AG04450 (cell line): ENCODE measurements at regions of chr6 and their contacts with region 1.

Region 1: GRCh38 chr6:34610819-34611477 is 54.8 kb upstream of the SPDEF start:
- DNase-seq: peak; percentile 59
- H3K4me3 ChIP-seq: no peak overlapping the region
- H3K27ac ChIP-seq: peak overlapping the region; percentile 49
- H3K27me3 ChIP-seq: no peaks in the 10 kb centered on the region
- CTCF ChIP-seq: no peak

Region 2: DNA sequence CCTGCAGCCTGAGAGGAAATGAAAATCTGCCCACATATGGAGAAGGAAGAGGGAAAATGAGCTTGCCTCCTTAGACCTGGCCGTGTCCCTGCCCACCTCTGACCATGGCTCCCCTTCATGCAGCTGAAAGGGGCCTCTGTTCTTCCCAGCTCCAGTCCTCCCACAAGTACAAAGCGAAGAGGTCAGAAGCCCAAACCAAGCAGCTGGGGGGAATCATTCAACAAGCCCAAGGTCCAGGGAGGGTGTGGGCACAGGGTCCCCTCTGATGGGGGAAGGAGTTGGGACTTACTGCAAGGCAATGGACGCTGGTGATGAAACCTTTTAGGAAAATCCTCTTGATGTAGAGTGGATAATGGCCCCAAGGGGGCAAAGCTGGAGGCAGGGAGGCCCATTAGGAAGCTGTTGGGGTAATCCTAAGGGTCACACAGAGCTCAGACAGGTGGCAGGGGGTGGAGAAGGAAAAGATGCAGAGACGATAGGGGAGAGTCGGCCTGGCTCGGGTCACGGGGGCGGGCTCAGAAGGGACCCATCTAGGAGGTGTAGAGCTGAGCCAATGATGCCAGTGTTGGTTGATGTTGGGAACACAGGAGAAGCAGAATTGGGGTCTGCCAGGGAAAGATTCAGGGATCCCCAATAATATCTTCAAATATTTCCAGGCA is 449.0 kb before region 1 on chr6:
- CTCF ChIA-PET with region 1: interaction called, 64 read pairs
- POLR2A ChIA-PET with region 1: no interaction called
- DNase-seq: no peak
- H3K4me3 ChIP-seq: no peak overlapping the region
- H3K27ac ChIP-seq: no peak overlapping the region
- H3K27me3 ChIP-seq: peaks cover 14% of the 10 kb centered on the region
- CTCF ChIP-seq: no peak

Region 3: DNA sequence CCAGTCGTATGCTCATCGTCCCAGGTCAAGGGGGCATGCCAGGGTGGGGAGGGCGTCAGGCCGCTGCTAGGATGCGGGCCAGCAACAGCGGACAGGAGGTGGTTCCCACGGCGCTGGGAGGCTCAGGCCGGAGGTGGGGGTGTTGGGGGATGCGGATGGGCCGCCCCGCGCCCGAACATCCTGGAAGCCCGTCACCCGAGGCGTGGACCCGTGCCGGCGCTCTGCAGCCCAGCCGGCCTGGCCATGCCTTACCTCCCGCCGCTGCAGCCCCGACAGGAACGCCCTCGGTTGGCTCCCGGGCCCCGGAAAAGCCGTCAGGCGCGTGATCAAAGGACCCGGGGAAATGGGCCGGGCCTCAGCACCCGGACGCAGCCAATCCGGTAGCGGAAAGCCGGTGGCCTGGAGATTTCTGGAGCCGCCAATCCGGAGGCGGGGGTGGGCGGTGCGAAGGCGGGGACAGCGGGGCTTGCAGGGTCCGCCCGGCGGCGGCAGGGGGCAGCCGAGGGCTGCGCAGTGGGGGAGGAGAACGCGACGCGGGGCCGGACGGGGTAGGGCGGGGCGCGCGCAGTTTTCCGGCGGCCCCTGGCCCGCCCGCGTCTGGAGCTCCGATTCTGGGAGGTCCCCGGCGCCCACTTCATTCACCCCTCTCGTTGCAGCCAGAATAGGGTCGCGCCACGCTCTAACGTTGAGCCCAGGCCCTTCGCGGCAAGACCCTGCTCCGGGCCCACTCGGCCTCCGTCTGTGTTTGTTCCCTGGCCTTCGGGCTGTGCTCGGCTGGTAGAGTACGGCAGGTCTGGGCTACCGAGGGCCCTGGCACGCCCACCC is 362.0 kb before region 1 on chr6 and contains the start of gene SMIM29:
- CTCF ChIA-PET with region 1: interaction called, 39 read pairs
- POLR2A ChIA-PET with region 1: interaction called, 3 read pairs
- DNase-seq: peak; percentile 87
- H3K4me3 ChIP-seq: peak within 1 kb of the TSS; percentile 91
- H3K27ac ChIP-seq: peak within 1 kb of the TSS; percentile 47
- H3K27me3 ChIP-seq: no peaks in the 10 kb centered on the region
- CTCF ChIP-seq: peak; percentile 80
- polyA plus RNA-seq, gene SMIM29: 11.3 and 17.2 TPM in 2 replicates

Region 4: GRCh38 chr6:34459899-34460593 is 150.9 kb before region 1 on chr6:
- CTCF ChIA-PET with region 1: interaction called, 53 read pairs
- POLR2A ChIA-PET with region 1: no interaction called
- DNase-seq: no peak
- H3K4me3 ChIP-seq: no peak overlapping the region
- H3K27ac ChIP-seq: no peak overlapping the region
- H3K27me3 ChIP-seq: peaks cover 3% of the 10 kb centered on the region
- CTCF ChIP-seq: peak; percentile 66

Region 5: GRCh38 chr6:34595332-34596184 is 15.4 kb before region 1 on chr6:
- CTCF ChIA-PET with region 1: interaction called, 26 read pairs
- POLR2A ChIA-PET with region 1: no interaction called
- DNase-seq: no peak
- H3K4me3 ChIP-seq: no peak overlapping the region
- H3K27ac ChIP-seq: no peak overlapping the region
- H3K27me3 ChIP-seq: no peaks in the 10 kb centered on the region
- CTCF ChIP-seq: no peak

Region 6: GRCh38 chr6:34904990-34905613 is 294.2 kb after region 1 on chr6:
- CTCF ChIA-PET with region 1: no interaction called
- POLR2A ChIA-PET with region 1: no interaction called
- DNase-seq: no peak
- H3K4me3 ChIP-seq: no peak overlapping the region
- H3K27ac ChIP-seq: no peak overlapping the region
- H3K27me3 ChIP-seq: peaks cover 7% of the 10 kb centered on the region
- CTCF ChIP-seq: no peak

Region 7: DNA sequence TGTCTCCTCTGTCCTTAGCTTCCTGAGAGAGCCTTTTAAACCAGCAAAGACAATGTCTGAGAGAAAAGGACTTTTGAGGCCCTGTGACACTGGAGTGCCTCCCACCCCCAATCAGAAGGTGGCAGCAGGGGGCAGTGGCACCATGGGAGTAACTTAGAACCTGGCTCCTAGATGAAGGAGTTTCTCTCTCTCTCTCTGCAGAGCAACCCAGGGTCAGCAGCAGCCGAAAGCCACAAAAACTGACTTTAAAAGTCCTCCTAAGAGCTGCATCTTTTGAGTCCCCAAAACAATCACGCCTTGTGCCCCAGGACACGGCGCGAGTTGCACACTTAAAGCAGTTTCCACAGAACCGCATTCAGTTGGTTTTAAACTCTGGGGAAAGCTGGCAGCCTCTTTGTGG is 535.5 kb after region 1 on chr6:
- CTCF ChIA-PET with region 1: no interaction called
- POLR2A ChIA-PET with region 1: no interaction called
- DNase-seq: no peak
- H3K4me3 ChIP-seq: no peak overlapping the region
- H3K27ac ChIP-seq: no peak overlapping the region
- H3K27me3 ChIP-seq: no peaks in the 10 kb centered on the region
- CTCF ChIP-seq: peak; percentile 68